ENCODE measurements at regions of chr1 and their contacts with region 1.

Region 1: GRCh38 chr1:48498096-48498791 is 26.2 kb upstream of the SPATA6 start:
- DNase-seq: peak; percentile 78
- H3K4me3 ChIP-seq: peak overlapping the region in 1 of 2 experiments; percentile 28; a peak in 1 of 4 replicates
- H3K27ac ChIP-seq: no peak overlapping the region
- H3K4me1 ChIP-seq: peaks cover 0 to 13% of the 10 kb centered on the region in 2 experiments; a peak in 1 of 4 replicates
- H3K27me3 ChIP-seq: no peaks in the 10 kb centered on the region
- CTCF ChIP-seq: peak; percentile 96
- EP300 ChIP-seq: no peak
- RAD21 ChIP-seq: peak; percentile 84

Region 2: GRCh38 chr1:48356901-48357300 is 141.3 kb before region 1 on chr1:
- CTCF ChIA-PET with region 1: interaction called, 27 read pairs
- POLR2A ChIA-PET with region 1: no interaction called
- DNase-seq: no peak
- H3K4me3 ChIP-seq: no peak overlapping the region
- H3K27ac ChIP-seq: no peak overlapping the region
- H3K4me1 ChIP-seq: no peaks in the 10 kb centered on the region; a peak in 1 of 4 replicates
- H3K27me3 ChIP-seq: no peaks in the 10 kb centered on the region
- CTCF ChIP-seq: no peak
- EP300 ChIP-seq: no peak
- RAD21 ChIP-seq: peak; percentile 59

Region 3: DNA sequence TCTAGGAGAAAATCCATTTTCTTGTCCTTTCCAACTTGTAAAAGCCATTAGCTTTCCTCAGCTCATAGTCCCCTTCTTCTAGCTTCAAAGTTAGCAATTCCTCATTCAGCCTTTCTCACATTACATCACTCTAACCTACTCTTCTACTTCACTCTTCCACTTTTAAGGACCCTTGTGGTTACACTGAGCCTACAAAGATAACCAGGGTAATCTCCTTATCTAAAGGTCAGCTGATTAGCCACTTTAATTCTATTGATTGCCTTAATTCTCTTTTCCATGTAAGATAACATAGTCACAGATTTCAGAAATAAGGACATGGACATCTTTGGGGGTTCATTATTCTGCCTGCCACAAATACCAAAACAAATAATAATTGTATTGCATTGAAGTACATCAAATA is 17.7 kb before region 1 on chr1:
- CTCF ChIA-PET with region 1: interaction called, 14 read pairs
- POLR2A ChIA-PET with region 1: no interaction called
- DNase-seq: no peak
- H3K4me3 ChIP-seq: no peak overlapping the region
- H3K27ac ChIP-seq: no peak overlapping the region
- H3K4me1 ChIP-seq: no peaks in the 10 kb centered on the region
- H3K27me3 ChIP-seq: no peaks in the 10 kb centered on the region
- CTCF ChIP-seq: no peak
- EP300 ChIP-seq: no peak
- RAD21 ChIP-seq: no peak

Region 4: GRCh38 chr1:48536477-48536876 is 38.2 kb after region 1 on chr1:
- CTCF ChIA-PET with region 1: interaction called, 22 read pairs
- POLR2A ChIA-PET with region 1: no interaction called
- DNase-seq: no peak
- H3K4me3 ChIP-seq: no peak overlapping the region
- H3K27ac ChIP-seq: no peak overlapping the region
- H3K4me1 ChIP-seq: peaks cover 0 to 3% of the 10 kb centered on the region in 2 experiments; a peak in 1 of 4 replicates
- H3K27me3 ChIP-seq: no peaks in the 10 kb centered on the region
- CTCF ChIP-seq: no peak
- EP300 ChIP-seq: no peak
- RAD21 ChIP-seq: no peak

Region 5: DNA sequence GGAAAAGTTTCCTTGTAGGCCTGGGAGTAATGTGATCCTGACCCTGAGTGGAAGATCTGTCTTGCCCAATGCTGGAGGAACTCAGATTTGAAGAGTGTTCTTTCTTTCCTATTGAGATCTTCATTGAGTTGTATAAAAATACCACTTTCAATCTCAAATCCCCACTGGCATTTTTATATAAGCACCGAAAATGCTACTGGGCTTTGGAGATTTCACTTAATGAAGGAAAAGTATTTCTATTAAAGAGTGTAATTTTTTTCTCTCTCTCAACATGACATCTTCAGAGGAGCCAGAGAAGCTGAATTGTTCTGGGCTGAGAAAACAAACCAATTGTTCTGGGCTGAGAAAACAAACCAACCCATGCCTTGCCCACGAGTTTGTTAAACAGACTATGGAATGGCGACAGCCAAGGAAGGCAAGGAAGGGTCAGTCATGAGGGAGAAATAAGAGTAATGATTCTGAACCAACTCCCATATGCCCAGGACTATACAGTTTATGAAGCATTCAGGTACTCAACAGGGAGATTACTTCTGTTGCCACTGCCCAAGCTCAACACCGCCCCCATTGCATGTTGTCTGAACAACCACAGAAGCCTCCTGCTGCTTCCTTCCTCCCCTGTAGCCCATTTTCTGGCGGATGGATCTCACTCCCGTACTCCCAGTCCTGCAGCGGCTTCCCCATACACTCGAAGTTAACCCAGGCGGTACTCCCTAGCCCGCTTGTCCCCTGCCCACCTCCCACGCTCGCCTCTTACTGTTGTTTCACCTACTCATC is 175.3 kb after region 1 on chr1:
- CTCF ChIA-PET with region 1: no interaction called
- POLR2A ChIA-PET with region 1: no interaction called
- DNase-seq: no peak
- H3K4me3 ChIP-seq: no peak overlapping the region; a peak in 1 of 4 replicates
- H3K27ac ChIP-seq: no peak overlapping the region
- H3K4me1 ChIP-seq: peaks cover 0 to 17% of the 10 kb centered on the region in 2 experiments; a peak in 1 of 4 replicates
- H3K27me3 ChIP-seq: no peaks in the 10 kb centered on the region
- CTCF ChIP-seq: no peak
- EP300 ChIP-seq: no peak
- RAD21 ChIP-seq: 0 out of 2 replicates have a peak, but pooled peaks have one; percentile 4

Measured in SK-N-SH (cell line).